ENCODE measurements at regions of chr12 and their contacts with region 1.

Region 1: GRCh38 chr12:52156736-52157565 is 34.9 kb downstream of the KRT80 start:
- DNase-seq: peak; percentile 82 to 94
- ATAC-seq: peak; percentile 81
- H3K4me3 ChIP-seq: no peak overlapping the region
- H3K27ac ChIP-seq: no peak overlapping the region
- H3K4me1 ChIP-seq: no peaks in the 10 kb centered on the region
- H3K27me3 ChIP-seq: no peaks in the 10 kb centered on the region

Region 2: GRCh38 chr12:52203075-52203921 is 46.3 kb after region 1 on chr12:
- intact Hi-C with region 1: no loop called
- DNase-seq: peak; percentile 74 to 88
- ATAC-seq: peak; percentile 43
- H3K4me3 ChIP-seq: no peak overlapping the region
- H3K27ac ChIP-seq: no peak overlapping the region
- H3K4me1 ChIP-seq: no peaks in the 10 kb centered on the region
- H3K27me3 ChIP-seq: no peaks in the 10 kb centered on the region

Region 3: GRCh38 chr12:52221912-52222457 is 65.0 kb after region 1 on chr12:
- intact Hi-C with region 1: no loop called
- DNase-seq: peak; percentile 75 to 89
- ATAC-seq: no peak
- H3K4me3 ChIP-seq: no peak overlapping the region
- H3K27ac ChIP-seq: peak overlapping the region in 1 of 2 donors; percentile 20
- H3K4me1 ChIP-seq: peaks cover 0 to 7% of the 10 kb centered on the region in 2 donors
- H3K27me3 ChIP-seq: no peaks in the 10 kb centered on the region

Region 4: GRCh38 chr12:52327052-52327829 is 170.3 kb after region 1 on chr12:
- intact Hi-C with region 1: loop called (anchors 1 to 2 kb)
- DNase-seq: peak; percentile 86 to 88
- ATAC-seq: peak; percentile 81
- H3K4me3 ChIP-seq: no peak overlapping the region
- H3K27ac ChIP-seq: peak overlapping the region in 1 of 2 donors; percentile 27
- H3K4me1 ChIP-seq: no peaks in the 10 kb centered on the region
- H3K27me3 ChIP-seq: no peaks in the 10 kb centered on the region

Region 5: GRCh38 chr12:52506858-52507715 is 350.1 kb after region 1 on chr12:
- intact Hi-C with region 1: loop called (anchors 5 to 10 kb)
- DNase-seq: no peak
- ATAC-seq: no peak
- H3K4me3 ChIP-seq: no peak overlapping the region
- H3K27ac ChIP-seq: no peak overlapping the region
- H3K4me1 ChIP-seq: no peaks in the 10 kb centered on the region
- H3K27me3 ChIP-seq: no peaks in the 10 kb centered on the region

Region 6: DNA sequence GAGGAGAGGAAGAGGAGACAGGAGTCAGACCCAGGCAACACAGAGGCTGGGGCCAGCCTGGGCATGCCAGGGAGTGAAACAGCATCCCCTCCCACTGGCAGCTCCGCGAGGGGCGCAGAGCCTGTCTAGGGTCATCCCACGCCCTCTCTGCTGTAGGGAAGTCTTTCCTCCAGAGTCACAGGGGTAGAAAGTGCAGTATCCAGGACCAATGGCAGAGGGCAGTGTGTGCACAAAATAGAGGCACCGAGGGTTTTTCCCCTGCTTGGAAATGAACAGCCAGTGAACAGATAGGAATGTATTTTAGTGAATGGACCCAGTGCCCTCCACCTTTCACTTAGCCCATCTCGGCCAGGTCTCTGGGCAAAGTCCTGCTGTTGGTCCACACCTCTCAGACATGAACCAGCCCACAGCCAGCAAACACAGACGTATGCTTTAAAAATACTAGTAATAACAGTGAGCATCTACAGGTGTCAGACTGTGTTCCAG is 426.1 kb after region 1 on chr12:
- intact Hi-C with region 1: loop called in 1 of 2 experiments (anchors 5 kb)
- DNase-seq: no peak
- ATAC-seq: peak; percentile 64
- H3K4me3 ChIP-seq: no peak overlapping the region
- H3K27ac ChIP-seq: no peak overlapping the region
- H3K4me1 ChIP-seq: no peaks in the 10 kb centered on the region
- H3K27me3 ChIP-seq: no peaks in the 10 kb centered on the region

Region 7: DNA sequence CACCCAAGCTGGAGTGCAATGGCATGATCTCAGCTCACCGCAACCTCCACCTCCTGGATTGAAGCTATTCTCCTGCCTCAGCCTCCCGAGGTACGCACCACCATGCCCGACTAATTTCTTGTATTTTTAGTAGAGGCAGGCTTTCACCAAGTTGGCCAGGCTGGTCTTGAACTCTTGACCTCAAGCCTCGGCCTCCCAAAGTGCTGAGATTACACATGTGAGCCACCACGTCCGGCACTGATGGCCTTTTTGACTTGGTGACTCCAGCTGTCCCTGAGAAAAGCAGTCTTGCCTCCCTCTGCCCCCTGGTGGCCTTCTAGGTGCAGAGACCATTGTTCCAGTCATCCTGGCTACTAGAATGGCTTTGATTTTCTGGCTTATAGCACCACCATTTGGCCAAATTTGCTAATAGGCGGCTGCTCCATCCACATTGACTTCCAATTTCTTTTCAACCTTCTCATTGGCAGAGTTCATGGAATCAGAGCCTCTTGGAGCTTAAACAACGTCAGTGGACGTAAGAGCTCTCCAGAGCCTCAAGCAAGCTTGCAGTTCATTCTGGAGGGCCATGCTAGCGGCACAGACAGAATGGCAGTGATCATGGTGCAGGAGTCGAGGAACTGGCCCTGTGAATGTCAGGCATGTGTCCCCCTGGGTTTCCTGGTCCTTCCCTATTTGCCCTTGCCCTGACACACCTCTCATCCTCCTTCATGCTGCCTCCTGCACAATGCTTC is 823.9 kb after region 1 on chr12:
- intact Hi-C with region 1: loop called (anchors 5 to 10 kb)
- DNase-seq: peak; percentile 91 to 93
- ATAC-seq: peak; percentile 87
- H3K4me3 ChIP-seq: no peak overlapping the region
- H3K27ac ChIP-seq: no peak overlapping the region
- H3K4me1 ChIP-seq: no peaks in the 10 kb centered on the region
- H3K27me3 ChIP-seq: no peaks in the 10 kb centered on the region